ENCODE measurements at regions of chr19 and their contacts with region 1.

Region 1: DNA sequence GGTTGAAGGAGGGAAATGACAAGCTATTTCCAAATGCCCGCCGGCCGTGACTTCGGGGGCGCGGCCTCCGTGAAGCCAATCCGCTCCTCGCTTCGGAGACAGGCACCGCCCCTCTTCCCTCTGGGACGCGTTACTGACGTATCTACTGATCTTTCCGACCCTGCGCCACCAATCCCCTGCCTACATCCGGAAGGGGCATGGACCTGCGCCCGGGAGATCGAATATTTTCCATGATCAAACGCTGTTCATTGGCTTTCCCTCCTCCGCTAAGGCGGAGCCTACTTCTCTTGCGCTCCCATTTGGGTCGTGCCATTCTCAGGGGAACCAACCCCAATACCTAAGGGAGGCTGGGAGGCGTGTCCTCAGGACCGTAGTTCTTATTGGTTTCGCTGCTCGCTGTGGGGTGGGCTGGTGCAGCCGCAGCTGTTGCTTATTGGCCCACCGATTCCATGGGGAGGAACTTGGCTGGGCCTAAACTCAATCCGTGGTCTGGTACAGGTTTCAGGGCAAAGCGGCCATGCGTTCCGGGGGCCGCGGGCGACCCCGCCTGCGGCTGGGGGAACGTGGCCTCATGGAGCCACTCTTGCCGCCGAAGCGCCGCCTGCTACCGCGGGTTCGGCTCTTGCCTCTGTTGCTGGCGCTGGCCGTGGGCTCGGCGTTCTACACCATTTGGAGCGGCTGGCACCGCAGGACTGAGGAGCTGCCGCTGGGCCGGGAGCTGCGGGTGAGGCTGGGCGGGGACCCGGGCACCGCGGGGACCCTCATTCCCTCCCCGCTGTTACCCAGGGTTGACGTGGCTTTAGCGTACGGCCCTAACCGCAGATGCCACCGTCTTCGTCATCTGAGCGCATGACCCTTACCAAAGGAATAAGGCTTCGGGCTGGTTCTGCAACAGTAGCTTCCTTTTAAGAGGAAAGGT is at the start of gene QPCTL:
- DNase-seq: peak; percentile 98 to 99
- H3K4me3 ChIP-seq: peak within 1 kb of the TSS; percentile 82 to 87
- H3K27ac ChIP-seq: peak within 1 kb of the TSS; percentile 87 to 93
- H3K4me1 ChIP-seq: peaks cover 0 to 15% of the 10 kb centered on the region in 2 donors
- H3K27me3 ChIP-seq: no peaks in the 10 kb centered on the region
- CTCF ChIP-seq: no peak
- total RNA-seq, gene QPCTL: 7.2 TPM

Region 2: DNA sequence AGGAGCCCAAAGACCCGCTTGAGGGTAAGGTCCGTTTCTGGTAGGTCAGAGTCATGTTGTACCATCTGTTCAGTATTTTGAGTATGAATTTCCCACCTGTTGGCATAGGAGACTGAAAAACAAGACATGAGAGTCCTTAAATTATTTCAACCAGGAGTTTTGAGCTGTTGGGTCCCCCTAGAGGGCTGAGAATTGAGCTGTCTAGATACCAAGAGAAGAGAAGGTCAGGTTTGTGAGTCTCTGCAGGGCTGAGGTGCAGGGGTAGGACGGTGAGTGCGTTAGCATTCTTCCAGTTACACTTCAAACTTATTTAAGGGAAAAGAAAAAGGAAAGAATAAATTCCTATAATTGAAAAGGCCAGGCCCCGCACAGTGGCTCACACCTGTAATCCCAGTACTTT is 909.7 kb before region 1 on chr19:
- intact Hi-C with region 1: no loop called
- DNase-seq: no peak
- H3K4me3 ChIP-seq: no peak overlapping the region
- H3K27ac ChIP-seq: no peak overlapping the region
- H3K4me1 ChIP-seq: peaks cover 0 to 3% of the 10 kb centered on the region in 2 donors
- H3K27me3 ChIP-seq: no peaks in the 10 kb centered on the region
- CTCF ChIP-seq: no peak

Region 3: GRCh38 chr19:45423589-45424190 is 268.8 kb before region 1 on chr19 and contains the start of gene ERCC1:
- intact Hi-C with region 1: loop called (anchors 5 kb)
- DNase-seq: peak; percentile 76 to 98
- H3K4me3 ChIP-seq: peak within 1 kb of the TSS; percentile 69 to 85
- H3K27ac ChIP-seq: peak within 1 kb of the TSS; percentile 89 to 95
- H3K4me1 ChIP-seq: peaks cover 0 to 32% of the 10 kb centered on the region in 2 donors
- H3K27me3 ChIP-seq: no peaks in the 10 kb centered on the region
- CTCF ChIP-seq: no peak
- total RNA-seq, gene ERCC1: 142 TPM

Region 4: DNA sequence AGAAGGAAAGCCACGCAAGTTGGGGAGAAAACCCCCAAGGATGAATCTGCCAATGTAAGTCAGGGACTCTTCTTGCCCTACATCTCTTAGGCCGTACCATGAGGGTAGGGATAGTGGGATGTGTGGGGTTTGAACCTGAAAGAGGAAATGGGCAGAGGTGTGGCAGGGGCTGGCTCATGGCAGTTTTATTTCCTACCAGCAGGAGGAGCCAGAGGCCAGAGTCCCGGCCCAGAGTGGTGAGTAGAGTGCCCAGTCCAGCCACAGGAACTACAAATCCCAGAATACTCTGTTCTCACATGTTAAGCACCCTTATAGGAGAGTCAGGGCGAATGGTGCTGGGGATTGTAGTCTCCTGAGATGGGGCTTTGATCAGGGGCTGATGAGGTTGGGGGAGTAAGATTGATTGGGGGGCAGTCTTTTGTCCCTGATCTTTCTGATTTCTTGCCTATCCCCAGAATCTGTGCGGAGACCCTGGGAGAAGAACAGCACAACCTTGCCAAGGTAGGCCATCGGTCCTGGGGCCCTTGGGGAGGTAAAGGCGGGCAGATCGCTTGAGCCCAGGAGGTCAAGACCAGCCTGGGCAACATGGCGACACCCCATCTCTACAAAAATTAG is 168.7 kb before region 1 on chr19:
- intact Hi-C with region 1: loop called (anchors 5 kb)
- DNase-seq: peak; percentile 47 to 89
- H3K4me3 ChIP-seq: no peak overlapping the region
- H3K27ac ChIP-seq: peak overlapping the region; percentile 38 to 46
- H3K4me1 ChIP-seq: peaks cover 0 to 6% of the 10 kb centered on the region in 2 donors
- H3K27me3 ChIP-seq: no peaks in the 10 kb centered on the region
- CTCF ChIP-seq: peak; percentile 86 to 92 (median 90)

Region 5: GRCh38 chr19:45637890-45638667 is 54.4 kb before region 1 on chr19:
- intact Hi-C with region 1: loop called (anchors 2 kb)
- DNase-seq: no peak
- H3K4me3 ChIP-seq: peak overlapping the region; percentile 58 to 84
- H3K27ac ChIP-seq: peak overlapping the region in 1 of 2 donors; percentile 52
- H3K4me1 ChIP-seq: peaks cover 7 to 26% of the 10 kb centered on the region in 2 donors
- H3K27me3 ChIP-seq: no peaks in the 10 kb centered on the region
- CTCF ChIP-seq: no peak

Region 6: DNA sequence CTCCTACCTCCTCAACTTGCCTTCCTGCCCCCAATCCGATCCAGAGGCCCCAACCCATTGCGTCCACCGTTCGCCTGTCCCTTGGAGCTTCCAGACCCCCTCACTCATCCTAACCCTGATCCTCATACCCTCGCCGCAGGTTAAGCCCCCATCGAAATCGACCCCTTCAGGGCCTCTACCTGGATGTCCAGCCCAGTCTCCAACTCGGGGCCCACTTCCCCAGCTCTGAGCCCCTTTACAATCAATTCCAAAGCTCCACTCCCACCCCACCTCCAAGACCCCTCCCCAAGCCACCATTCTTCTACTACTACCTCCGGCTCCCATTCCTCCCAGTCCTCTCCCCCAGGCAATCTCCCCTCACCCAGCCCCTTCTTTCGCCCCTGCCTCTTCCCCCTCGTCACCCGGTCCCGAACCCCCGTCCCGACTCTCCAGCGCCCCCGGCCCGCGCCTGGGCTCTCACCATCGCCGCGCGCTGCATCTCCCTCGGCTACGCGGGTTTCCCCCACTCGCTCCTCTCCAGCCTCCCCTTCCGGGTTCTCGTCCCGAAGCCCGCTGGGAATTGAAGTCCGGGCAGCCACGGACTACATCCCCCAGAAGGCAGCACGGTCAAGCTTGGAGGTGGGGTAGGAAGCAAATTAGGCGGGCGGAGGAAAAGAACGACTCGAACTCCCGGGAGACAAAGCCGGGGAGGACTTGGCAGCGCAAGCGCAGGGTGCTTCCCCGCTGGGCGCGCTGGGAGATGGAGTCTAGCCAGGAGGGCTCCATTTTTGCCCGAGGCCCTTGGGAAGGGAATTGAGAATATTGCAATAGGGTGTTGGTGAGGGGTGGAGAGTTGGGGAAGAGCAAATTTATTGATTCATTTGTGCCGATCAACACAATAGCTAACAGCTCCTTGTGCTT is 38.2 kb after region 1 on chr19 and contains the start of gene FBXO46:
- intact Hi-C with region 1: loop called (anchors 1 kb)
- DNase-seq: peak; percentile 95 to 99
- H3K4me3 ChIP-seq: peak within 1 kb of the TSS; percentile 88 to 89
- H3K27ac ChIP-seq: peak within 1 kb of the TSS; percentile 48 to 56
- H3K4me1 ChIP-seq: peaks cover 0 to 10% of the 10 kb centered on the region in 2 donors
- H3K27me3 ChIP-seq: no peaks in the 10 kb centered on the region
- CTCF ChIP-seq: peak in 1 of 3 experiments; percentile 9
- total RNA-seq, gene FBXO46: 27.5 TPM

Region 7: GRCh38 chr19:45798995-45799517 is 106.6 kb after region 1 on chr19:
- intact Hi-C with region 1: loop called (anchors 2 kb)
- DNase-seq: peak in 1 of 2 donors; percentile 86
- H3K4me3 ChIP-seq: no peak overlapping the region
- H3K27ac ChIP-seq: no peak overlapping the region
- H3K4me1 ChIP-seq: no peaks in the 10 kb centered on the region
- H3K27me3 ChIP-seq: no peaks in the 10 kb centered on the region
- CTCF ChIP-seq: peak; percentile 80 to 93 (median 90)

Measured in ascending aorta (tissue), 2 donors.